ENCODE measurements at regions of chrX and their contacts with region 1.

Region 1: DNA sequence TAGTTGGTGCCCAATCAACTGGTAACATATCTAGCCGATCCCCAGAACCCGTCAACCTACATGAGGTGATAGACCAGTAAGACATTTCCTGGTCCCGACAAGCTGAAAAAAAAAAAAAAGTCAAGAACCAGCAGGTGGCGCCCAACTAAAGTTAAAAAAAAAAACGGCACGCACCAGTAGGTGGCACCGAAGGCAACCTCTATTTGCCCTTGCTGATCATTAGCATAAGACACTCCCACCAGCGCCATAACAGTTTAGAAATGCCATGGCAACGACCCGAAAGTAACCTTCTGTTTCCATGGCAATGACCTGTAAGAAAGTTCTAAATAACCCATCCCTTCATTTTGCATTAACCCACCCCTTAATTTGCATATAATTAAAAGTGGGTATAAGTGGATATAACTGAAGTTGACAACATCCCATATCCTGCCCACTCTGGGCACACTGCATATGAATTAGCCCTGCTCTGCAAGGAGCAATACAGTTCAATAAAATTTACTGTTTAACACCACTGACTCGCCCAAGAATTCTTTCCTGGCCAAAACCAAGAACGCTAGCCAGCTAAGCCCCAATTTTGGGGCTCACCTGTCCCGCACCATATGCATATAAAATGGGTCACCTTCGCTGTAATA is 83.9 kb upstream of the SPANXB1 start:
- DNase-seq: peak; percentile 70
- ATAC-seq: peak; percentile 33; the same call in 1 of the 2 replicates
- H3K4me3 ChIP-seq: no peak overlapping the region
- H3K27ac ChIP-seq: no peak overlapping the region
- H3K4me1 ChIP-seq: 0 out of 2 replicates have a peak, but pooled peaks cover 6% of the 10 kb centered on the region
- H3K27me3 ChIP-seq: no peaks in the 10 kb centered on the region
- CTCF ChIP-seq: peak; percentile 86

Region 2: GRCh38 chrX:141176586-141177451 is 258.3 kb after region 1 on chrX and contains the start of gene LDOC1:
- CTCF ChIA-PET with region 1: no interaction called
- POLR2A ChIA-PET with region 1: interaction called, 3 read pairs
- intact Hi-C with region 1: loop called (anchors 10 kb)
- DNase-seq: peak; percentile 89
- ATAC-seq: peak; percentile 79
- H3K4me3 ChIP-seq: peak within 1 kb of the TSS; percentile 99
- H3K27ac ChIP-seq: peak within 1 kb of the TSS; percentile 40
- H3K4me1 ChIP-seq: peaks cover 14% of the 10 kb centered on the region; the same call in 1 of the 2 replicates
- H3K27me3 ChIP-seq: no peaks in the 10 kb centered on the region
- CTCF ChIP-seq: no peak
- total RNA-seq, gene LDOC1: 40.6 and 45.5 TPM in 2 replicates

Region 3: DNA sequence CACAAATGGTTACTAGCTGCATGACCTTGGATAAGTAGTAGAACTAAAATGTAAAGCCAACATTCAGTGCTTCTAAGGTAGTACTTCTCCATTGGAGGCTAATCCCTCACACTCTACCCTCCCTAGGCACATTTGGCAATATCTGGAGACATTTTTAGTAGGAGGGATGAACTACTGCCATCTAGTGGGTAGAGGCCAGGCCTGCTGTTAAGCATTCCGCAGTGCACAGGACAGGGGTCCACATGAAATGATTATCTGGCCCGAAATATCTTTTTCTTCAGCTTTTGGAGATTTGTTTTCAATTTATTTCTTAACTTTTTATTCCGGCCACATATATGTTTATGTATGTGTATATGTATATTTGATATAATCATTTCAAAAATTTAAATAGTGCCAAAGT is 359.8 kb after region 1 on chrX:
- CTCF ChIA-PET with region 1: no interaction called
- POLR2A ChIA-PET with region 1: no interaction called
- intact Hi-C with region 1: loop called (anchors 10 kb)
- DNase-seq: peak; percentile 54
- ATAC-seq: peak; percentile 42; the same call in 1 of the 2 replicates
- H3K4me3 ChIP-seq: no peak overlapping the region
- H3K27ac ChIP-seq: no peak overlapping the region
- H3K4me1 ChIP-seq: no peaks in the 10 kb centered on the region
- H3K27me3 ChIP-seq: no peaks in the 10 kb centered on the region
- CTCF ChIP-seq: peak; percentile 82

Region 4: DNA sequence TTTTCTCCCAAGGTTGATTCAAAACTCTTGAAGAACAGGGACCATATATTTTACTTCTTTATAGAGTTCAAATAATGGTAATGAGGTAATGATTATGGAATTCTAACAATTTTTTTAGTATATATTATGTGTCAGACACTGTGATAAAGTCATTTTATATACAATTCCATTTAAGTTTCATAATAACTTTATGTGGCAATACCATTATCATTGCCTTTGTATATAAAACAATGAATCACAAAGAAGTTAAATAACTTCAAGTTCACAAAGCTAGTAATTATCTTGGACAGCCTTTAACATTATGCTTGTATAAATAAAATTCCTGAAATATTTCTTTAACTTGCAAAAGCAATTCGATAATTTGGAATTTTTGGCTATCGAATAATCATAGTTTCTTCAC is 1005.8 kb after region 1 on chrX:
- CTCF ChIA-PET with region 1: no interaction called
- POLR2A ChIA-PET with region 1: no interaction called
- intact Hi-C with region 1: loop called (anchors 10 kb)
- DNase-seq: peak; percentile 52
- ATAC-seq: peak; percentile 79
- H3K4me3 ChIP-seq: no peak overlapping the region
- H3K27ac ChIP-seq: no peak overlapping the region
- H3K4me1 ChIP-seq: peaks cover 14% of the 10 kb centered on the region
- H3K27me3 ChIP-seq: no peaks in the 10 kb centered on the region
- CTCF ChIP-seq: no peak

Measured in PC-3 (cell line).